Sigmoid colon (tissue), 7 donors: ENCODE measurements at regions of chr1 and their contacts with region 1.

Region 1: GRCh38 chr1:248625990-248626389 is 8.9 kb downstream of the OR2T11 start:
- DNase-seq: no peak
- H3K4me3 ChIP-seq: no peak overlapping the region
- H3K27ac ChIP-seq: no peak overlapping the region
- H3K4me1 ChIP-seq: no peaks in the 10 kb centered on the region
- H3K27me3 ChIP-seq: no peaks in the 10 kb centered on the region
- CTCF ChIP-seq: no peak
- EP300 ChIP-seq: no peak
- POLR2A ChIP-seq: no peak

Region 2: DNA sequence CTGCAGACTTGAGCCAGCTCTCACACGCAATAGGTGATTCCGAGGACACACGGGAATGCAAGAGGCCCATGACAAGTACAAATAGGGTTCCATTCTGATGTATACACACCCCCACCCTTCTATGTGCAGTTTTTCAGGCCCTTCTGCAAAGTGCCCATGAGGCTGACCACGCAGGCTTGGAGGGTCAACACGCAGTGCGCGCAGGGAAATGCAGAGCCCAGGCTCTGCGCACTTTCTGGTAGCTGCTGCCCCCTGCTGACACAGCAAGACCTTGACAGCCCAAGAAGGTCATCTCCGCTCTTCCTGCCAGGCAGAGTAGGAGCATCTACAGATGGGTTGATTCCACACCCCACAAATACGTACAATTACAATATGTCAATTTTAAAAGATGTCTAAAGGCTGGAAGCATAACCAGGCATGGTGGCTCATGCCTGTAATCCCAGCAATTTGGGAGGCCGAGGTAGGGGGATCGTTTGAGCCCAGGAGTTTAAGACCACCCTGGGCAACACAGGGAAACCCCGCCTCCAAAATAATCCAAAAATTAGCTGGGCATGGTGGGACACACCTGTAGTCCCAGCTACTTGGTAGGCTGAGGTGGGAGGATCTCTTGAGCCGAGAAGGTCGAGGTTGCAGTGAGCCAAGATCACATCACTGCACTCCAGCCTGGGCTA is 181.2 kb after region 1 on chr1:
- intact Hi-C with region 1: loop called (anchors 2 kb)
- DNase-seq: no peak
- H3K4me3 ChIP-seq: no peak overlapping the region
- H3K27ac ChIP-seq: no peak overlapping the region
- H3K4me1 ChIP-seq: peaks cover 0 to 14% (median 13%) of the 10 kb centered on the region in 4 donors
- H3K27me3 ChIP-seq: no peaks in the 10 kb centered on the region
- CTCF ChIP-seq: peak; percentile 21 to 77 (median 66)
- EP300 ChIP-seq: no peak
- POLR2A ChIP-seq: no peak

Region 3: DNA sequence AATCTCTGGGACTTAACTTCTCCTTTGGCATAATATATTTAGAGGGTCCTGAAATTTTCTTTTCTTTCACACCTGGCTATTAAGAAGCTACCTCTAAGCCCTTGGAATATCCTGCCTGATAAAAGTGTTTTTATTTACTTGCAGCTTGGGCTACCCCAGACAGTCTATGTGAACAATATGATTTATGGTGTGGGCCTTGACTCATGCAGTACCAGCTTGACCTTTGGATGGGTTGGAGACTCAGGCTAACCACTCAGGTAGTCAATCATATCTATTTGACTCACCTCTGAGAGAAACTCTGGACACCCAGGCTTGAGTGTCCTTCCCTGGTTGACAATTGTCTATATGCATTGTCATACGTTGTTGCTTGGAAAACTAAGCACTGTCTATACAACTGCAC is 266.6 kb after region 1 on chr1:
- intact Hi-C with region 1: no loop called
- DNase-seq: no peak
- H3K4me3 ChIP-seq: no peak overlapping the region
- H3K27ac ChIP-seq: no peak overlapping the region
- H3K4me1 ChIP-seq: no peaks in the 10 kb centered on the region
- H3K27me3 ChIP-seq: no peaks in the 10 kb centered on the region
- CTCF ChIP-seq: no peak
- EP300 ChIP-seq: no peak
- POLR2A ChIP-seq: no peak